Ovary (tissue), 10 donors: ENCODE measurements at regions of chr22 and their contacts with region 1.

Region 1: DNA sequence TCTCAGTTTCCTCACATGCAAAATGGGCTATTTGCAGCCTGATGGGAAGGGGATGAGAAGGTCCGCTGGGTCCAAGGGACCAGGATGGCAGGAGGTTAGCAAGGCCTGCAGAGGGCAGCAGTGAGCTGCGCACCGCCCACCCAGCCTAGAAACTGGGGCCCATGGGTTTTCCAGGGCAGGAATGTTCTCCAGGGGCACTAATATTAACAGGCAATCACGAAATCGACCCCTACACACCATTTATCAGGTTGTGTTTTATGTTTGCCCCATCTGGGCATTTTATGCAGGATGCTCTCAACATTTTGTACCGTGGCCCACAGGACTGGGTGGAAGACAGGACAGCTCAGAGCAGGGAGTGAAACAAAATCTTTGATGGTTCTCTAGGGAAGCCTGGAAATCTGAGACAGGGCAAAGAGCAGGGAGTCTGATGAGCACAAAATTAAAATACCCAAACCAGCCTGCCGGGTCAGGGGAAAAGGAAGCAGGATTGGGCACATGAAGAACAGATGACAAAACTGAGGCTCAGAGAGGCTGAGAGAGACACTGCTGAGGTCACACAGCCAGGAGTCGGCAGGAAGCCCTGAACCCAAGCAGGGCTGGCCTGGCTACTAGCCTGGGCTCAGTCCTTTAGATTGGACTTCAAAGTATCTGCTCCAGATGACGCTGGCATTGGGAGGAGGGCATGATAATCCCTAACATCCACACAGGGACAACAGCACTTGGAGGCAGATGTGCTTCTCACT is 1.6 kb upstream of the BCR start:
- DNase-seq: peak; percentile 67 to 85 (median 78)
- H3K4me3 ChIP-seq: no peak overlapping the region
- H3K27ac ChIP-seq: no peak overlapping the region
- H3K4me1 ChIP-seq: peaks cover 22% of the 10 kb centered on the region
- H3K27me3 ChIP-seq: no peaks in the 10 kb centered on the region
- CTCF ChIP-seq: peak; percentile 95 to 96 (median 95)
- EP300 ChIP-seq: no peak
- POLR2A ChIP-seq: peak; percentile 28

Region 2: GRCh38 chr22:23281406-23282088 is 102.9 kb after region 1 on chr22:
- intact Hi-C with region 1: loop called (anchors 1 to 2 kb)
- DNase-seq: peak; percentile 83 to 91 (median 89)
- H3K4me3 ChIP-seq: no peak overlapping the region
- H3K27ac ChIP-seq: no peak overlapping the region
- H3K4me1 ChIP-seq: peaks cover 1% of the 10 kb centered on the region
- H3K27me3 ChIP-seq: no peaks in the 10 kb centered on the region
- CTCF ChIP-seq: peak; percentile 79 to 94 (median 93)
- EP300 ChIP-seq: no peak
- POLR2A ChIP-seq: no peak